ENCODE measurements at regions of chr6 and their contacts with region 1.

Region 1: DNA sequence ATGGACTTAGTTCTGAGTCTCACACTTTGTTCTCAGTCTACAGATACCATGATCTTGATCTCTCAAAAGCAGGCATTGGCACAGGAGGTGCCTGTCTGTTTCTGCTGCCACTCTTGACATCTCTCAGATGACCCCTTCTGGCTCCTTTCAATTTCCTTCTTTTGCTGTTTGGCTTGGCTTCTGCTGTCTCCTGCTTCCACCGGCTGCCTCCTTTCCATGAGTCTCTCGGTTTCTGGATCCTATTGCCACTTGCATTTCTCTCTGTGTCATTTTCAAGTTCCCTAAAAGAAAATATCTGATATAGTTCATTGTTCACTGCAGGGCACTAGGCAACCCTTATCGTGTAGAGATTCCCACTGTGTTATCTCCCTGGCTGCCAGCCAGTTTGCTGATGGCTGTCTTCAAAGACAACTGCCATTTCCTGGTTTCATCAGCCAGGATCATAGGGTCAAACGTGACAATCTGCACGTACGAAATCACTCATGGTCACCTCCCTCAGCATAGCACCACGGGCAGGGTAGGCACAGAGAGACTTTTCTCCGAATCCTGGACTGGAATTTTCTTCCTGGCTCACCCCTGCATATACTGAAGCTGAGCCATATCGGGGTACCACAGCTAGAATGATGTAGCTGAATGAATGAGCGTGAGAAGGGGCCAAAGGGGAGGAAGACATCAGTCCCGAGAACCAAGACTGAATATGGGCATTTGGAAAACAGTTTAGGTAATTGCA is 144.6 kb upstream of the TMEM170B start:
- DNase-seq: peak; percentile 57 to 67
- H3K4me3 ChIP-seq: no peak overlapping the region
- H3K4me3 Mint-ChIP-seq: no peak overlapping the region
- H3K27ac Mint-ChIP-seq: peak overlapping the region; percentile 89
- H3K4me1 ChIP-seq: peaks cover 58% of the 10 kb centered on the region
- H3K4me1 Mint-ChIP-seq: peaks cover 37% of the 10 kb centered on the region
- H3K27me3 ChIP-seq: no peaks in the 10 kb centered on the region
- H3K27me3 Mint-ChIP-seq: no peaks in the 10 kb centered on the region
- CTCF ChIP-seq: no peak

Region 2: GRCh38 chr6:11366183-11366933 is 26.6 kb before region 1 on chr6:
- CTCF ChIA-PET with region 1: no interaction called
- POLR2A ChIA-PET with region 1: interaction called, 6 read pairs
- intact Hi-C with region 1: loop called (anchors 1 kb)
- DNase-seq: no peak
- H3K4me3 ChIP-seq: no peak overlapping the region
- H3K4me3 Mint-ChIP-seq: peak overlapping the region; percentile 46
- H3K27ac Mint-ChIP-seq: peak overlapping the region; percentile 99
- H3K4me1 ChIP-seq: peaks cover 59% of the 10 kb centered on the region
- H3K4me1 Mint-ChIP-seq: peaks cover 51% of the 10 kb centered on the region
- H3K27me3 ChIP-seq: no peaks in the 10 kb centered on the region
- H3K27me3 Mint-ChIP-seq: no peaks in the 10 kb centered on the region
- CTCF ChIP-seq: no peak

Region 3: GRCh38 chr6:11424395-11425050 is 31.6 kb after region 1 on chr6:
- CTCF ChIA-PET with region 1: no interaction called
- POLR2A ChIA-PET with region 1: no interaction called
- intact Hi-C with region 1: loop called (anchors 1 kb)
- DNase-seq: no peak
- H3K4me3 ChIP-seq: no peak overlapping the region
- H3K4me3 Mint-ChIP-seq: no peak overlapping the region
- H3K27ac Mint-ChIP-seq: peak overlapping the region; percentile 11
- H3K4me1 ChIP-seq: peaks cover 47% of the 10 kb centered on the region
- H3K4me1 Mint-ChIP-seq: peaks cover 49% of the 10 kb centered on the region
- H3K27me3 ChIP-seq: no peaks in the 10 kb centered on the region
- H3K27me3 Mint-ChIP-seq: no peaks in the 10 kb centered on the region
- CTCF ChIP-seq: no peak

Measured in Caco-2 (cell line).